Posterior vena cava (tissue), 2 donors: ENCODE measurements at regions of chr4 and their contacts with region 1.

Region 1: GRCh38 chr4:133424605-133425004 is 275.5 kb downstream of the PCDH10 start:
- DNase-seq: no peak

Region 2: GRCh38 chr4:133483600-133484246 is 59.1 kb after region 1 on chr4:
- intact Hi-C with region 1: loop called in 1 of 2 experiments (anchors 2 kb)
- DNase-seq: no peak

Region 3: DNA sequence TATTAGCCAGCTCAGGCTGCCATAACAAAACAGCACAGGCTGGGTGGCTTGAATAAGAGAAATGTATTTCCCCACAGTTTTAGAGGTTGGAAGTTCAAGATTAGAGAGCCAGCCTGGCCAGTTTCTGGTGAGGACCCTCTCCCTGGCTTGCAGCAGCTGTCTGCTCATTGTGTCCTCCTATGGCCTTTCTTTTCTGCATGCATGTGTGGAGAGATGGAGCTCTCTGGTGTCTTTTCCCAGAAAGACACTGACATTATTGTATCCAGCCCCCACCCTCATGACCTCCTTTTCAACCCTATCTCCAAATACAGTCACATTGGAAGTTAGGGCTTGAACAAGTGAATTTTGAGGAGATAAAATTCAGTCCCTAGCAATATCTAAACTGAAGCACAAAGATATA is 1040.8 kb after region 1 on chr4:
- intact Hi-C with region 1: no loop called
- DNase-seq: no peak